GM12878 (cell line): ENCODE measurements at regions of chr15 and their contacts with region 1.

Region 1: DNA sequence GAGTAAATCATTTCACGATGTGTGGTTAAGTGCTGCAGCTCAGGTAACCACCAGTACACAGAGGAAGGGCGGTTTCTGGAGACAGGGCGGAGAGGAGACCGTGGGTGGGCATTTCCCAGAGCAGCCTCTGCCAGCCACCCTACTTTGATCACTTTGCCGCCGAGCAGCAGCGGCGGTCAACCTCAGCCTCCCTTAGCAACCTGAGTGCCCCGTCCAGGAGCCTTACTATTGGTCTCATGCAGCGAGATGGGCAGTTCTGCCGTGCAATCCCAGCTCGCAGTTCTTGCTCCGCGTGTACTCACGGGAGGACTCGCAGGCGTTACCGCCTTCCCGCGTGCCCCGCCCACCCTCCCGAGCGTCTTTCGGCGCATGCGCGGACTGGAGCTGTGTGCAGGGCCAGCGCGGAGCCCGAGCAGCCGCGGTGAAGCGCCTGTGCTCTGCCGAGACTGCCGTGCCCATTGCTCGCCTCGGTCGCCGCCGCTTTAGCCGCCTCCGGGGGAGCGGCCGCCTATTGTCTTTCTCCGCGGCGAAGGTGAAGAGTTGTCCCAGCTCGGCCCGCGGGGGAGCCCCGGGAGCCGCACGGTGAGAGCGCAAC is at the start of gene AKAP13:
- DNase-seq: peak; percentile 98
- ATAC-seq: peak; percentile 89
- H3K4me3 ChIP-seq: peak within 1 kb of the TSS; percentile 80
- H3K27ac ChIP-seq: peak within 1 kb of the TSS; percentile 78
- H3K4me1 ChIP-seq: peaks cover 12% of the 10 kb centered on the region; the same call in 1 of the 2 replicates
- H3K27me3 ChIP-seq: no peaks in the 10 kb centered on the region; a peak in 2 of 4 replicates
- CTCF ChIP-seq: no peak
- EP300 ChIP-seq: no peak
- POLR2A ChIP-seq: peak; percentile 88
- RAD21 ChIP-seq: no peak
- polyA plus RNA-seq, gene AKAP13: 14.4 to 21.5 TPM

Region 2: GRCh38 chr15:83644439-83644838 is 1735.9 kb before region 1 on chr15:
- CTCF ChIA-PET with region 1: no interaction called
- POLR2A ChIA-PET with region 1: no interaction called
- RAD21 ChIA-PET with region 1: no interaction called
- SMC1A ChIA-PET with region 1: no interaction called
- in situ Hi-C with region 1: no loop called
- intact Hi-C with region 1: no loop called
- DNase-seq: no peak
- ATAC-seq: no peak
- H3K4me3 ChIP-seq: no peak overlapping the region
- H3K27ac ChIP-seq: no peak overlapping the region
- H3K4me1 ChIP-seq: no peaks in the 10 kb centered on the region
- H3K27me3 ChIP-seq: no peaks in the 10 kb centered on the region; a peak in 1 of 4 replicates
- CTCF ChIP-seq: no peak
- EP300 ChIP-seq: no peak
- POLR2A ChIP-seq: no peak
- RAD21 ChIP-seq: no peak

Region 3: GRCh38 chr15:85361323-85361722 is 19.0 kb before region 1 on chr15:
- CTCF ChIA-PET with region 1: interaction called, 3 read pairs
- POLR2A ChIA-PET with region 1: interaction called, 10 read pairs
- RAD21 ChIA-PET with region 1: interaction called, 20 read pairs
- SMC1A ChIA-PET with region 1: interaction called, 25 read pairs
- in situ Hi-C with region 1: no loop called
- intact Hi-C with region 1: loop called (anchors 2 kb)
- DNase-seq: peak; percentile 66
- ATAC-seq: peak; percentile 87
- H3K4me3 ChIP-seq: peak overlapping the region; percentile 40; the same call in 1 of the 2 replicates
- H3K27ac ChIP-seq: peak overlapping the region; percentile 72
- H3K4me1 ChIP-seq: peaks cover 32% of the 10 kb centered on the region
- H3K27me3 ChIP-seq: no peaks in the 10 kb centered on the region
- CTCF ChIP-seq: no peak
- EP300 ChIP-seq: peak; percentile 60 to 81; a peak in 2 of 4 replicates
- POLR2A ChIP-seq: no peak
- RAD21 ChIP-seq: no peak